CD8-positive, alpha-beta T cell (primary cell): ENCODE measurements at regions of chr17 and their contacts with region 1.

Region 1: DNA sequence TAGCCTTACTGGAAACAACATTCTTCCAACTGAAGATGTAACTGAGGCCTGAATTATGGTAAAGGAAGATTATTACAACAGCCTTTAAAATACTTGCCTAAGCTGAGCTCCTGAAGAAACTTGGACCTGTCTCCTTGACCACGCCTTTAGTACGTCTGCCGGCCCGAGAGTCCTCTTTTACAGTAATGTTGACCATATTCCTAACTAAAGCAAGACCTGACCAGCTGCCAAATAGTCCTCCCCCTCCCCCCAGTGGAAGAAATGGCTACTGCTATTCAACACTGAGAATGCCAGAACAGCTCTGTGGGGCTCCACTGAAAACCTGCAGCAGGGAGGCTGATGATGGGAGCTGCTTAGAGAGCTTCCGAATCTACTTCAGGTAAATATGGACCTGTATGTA is 12.6 kb upstream of the FOXJ1 start:
- DNase-seq: peak in 1 of 9 experiments; percentile 43
- ATAC-seq: no peak
- H3K4me3 ChIP-seq: no peak overlapping the region
- H3K4me3 Mint-ChIP-seq: no peak overlapping the region
- H3K27ac ChIP-seq: peak overlapping the region in 1 of 2 experiments; percentile 49
- H3K27ac Mint-ChIP-seq: peak overlapping the region; percentile 99
- H3K4me1 ChIP-seq: peaks cover 52% of the 10 kb centered on the region
- H3K4me1 Mint-ChIP-seq: peaks cover 69% of the 10 kb centered on the region
- H3K27me3 ChIP-seq: no peaks in the 10 kb centered on the region
- H3K27me3 Mint-ChIP-seq: no peaks in the 10 kb centered on the region
- CTCF ChIP-seq: no peak

Region 2: DNA sequence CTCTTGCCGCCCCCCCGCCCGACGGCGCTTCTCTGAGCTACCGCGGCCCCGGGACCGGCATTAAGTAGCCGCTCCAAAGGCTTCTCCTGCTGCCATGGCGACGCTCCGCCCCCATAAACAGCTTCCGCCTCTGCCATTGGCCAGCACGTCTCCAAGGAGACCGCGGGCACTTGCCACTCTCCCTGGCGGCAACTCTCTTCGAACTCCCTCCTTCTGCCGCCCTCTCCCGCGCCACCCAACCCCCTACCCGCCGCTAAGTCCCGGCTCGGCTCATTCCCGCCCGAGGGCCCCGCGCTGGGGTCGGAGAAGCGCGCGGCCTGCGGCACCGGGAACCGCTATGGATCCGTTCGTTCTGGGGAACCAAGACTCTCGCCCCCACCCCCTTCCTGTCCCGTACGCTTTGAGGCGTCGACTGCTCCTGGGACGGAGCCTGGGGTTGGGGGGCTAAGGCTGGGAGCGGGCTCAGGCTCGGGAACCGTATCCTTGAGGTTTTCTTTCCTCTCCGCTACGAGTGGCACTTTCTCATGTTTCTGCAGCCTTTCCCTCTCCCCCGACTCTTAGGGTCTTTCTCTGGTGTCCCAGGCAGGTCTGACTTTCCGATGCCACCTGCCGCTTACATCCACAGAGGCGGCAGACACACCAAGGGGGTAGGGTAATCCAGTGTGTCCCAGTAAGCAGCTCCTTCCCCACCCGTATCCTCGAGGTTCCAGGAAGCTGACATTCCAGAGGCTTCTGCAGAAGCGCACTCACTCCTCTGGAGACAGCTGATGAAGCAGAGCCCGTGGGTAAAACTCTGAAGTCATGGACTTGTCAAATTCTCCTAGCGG is 12.2 kb before region 1 on chr17 and contains the start of gene FOXJ1:
- CTCF ChIA-PET with region 1: interaction called, 26 read pairs
- POLR2A ChIA-PET with region 1: interaction called, 19 read pairs
- intact Hi-C with region 1: loop called in 1 of 2 experiments (anchors 1 kb)
- DNase-seq: peak; percentile 86 to 96 (median 91)
- ATAC-seq: peak; percentile 55
- H3K4me3 ChIP-seq: peak within 1 kb of the TSS; percentile 54 to 67
- H3K4me3 Mint-ChIP-seq: peak within 1 kb of the TSS; percentile 88
- H3K27ac ChIP-seq: peak within 1 kb of the TSS; percentile 45 to 59
- H3K27ac Mint-ChIP-seq: peak within 1 kb of the TSS; percentile 88
- H3K4me1 ChIP-seq: peaks cover 74% of the 10 kb centered on the region
- H3K4me1 Mint-ChIP-seq: peaks cover 65% of the 10 kb centered on the region
- H3K27me3 ChIP-seq: peaks cover 0 to 8% of the 10 kb centered on the region in 2 experiments
- H3K27me3 Mint-ChIP-seq: no peaks in the 10 kb centered on the region
- CTCF ChIP-seq: no peak
- total RNA-seq, gene FOXJ1: 2.2 to 2.7 TPM

Region 3: GRCh38 chr17:76171706-76172105 is 18.1 kb after region 1 on chr17:
- CTCF ChIA-PET with region 1: interaction called, 63 read pairs
- POLR2A ChIA-PET with region 1: interaction called, 8 read pairs
- intact Hi-C with region 1: loop called in 1 of 2 experiments (anchors 1 kb)
- DNase-seq: no peak
- ATAC-seq: no peak
- H3K4me3 ChIP-seq: no peak overlapping the region
- H3K4me3 Mint-ChIP-seq: no peak overlapping the region
- H3K27ac ChIP-seq: no peak overlapping the region
- H3K27ac Mint-ChIP-seq: no peak overlapping the region
- H3K4me1 ChIP-seq: peaks cover 11% of the 10 kb centered on the region
- H3K4me1 Mint-ChIP-seq: peaks cover 24% of the 10 kb centered on the region
- H3K27me3 ChIP-seq: no peaks in the 10 kb centered on the region
- H3K27me3 Mint-ChIP-seq: no peaks in the 10 kb centered on the region
- CTCF ChIP-seq: no peak